ENCODE measurements at regions of chr6 and their contacts with region 1.

Region 1: DNA sequence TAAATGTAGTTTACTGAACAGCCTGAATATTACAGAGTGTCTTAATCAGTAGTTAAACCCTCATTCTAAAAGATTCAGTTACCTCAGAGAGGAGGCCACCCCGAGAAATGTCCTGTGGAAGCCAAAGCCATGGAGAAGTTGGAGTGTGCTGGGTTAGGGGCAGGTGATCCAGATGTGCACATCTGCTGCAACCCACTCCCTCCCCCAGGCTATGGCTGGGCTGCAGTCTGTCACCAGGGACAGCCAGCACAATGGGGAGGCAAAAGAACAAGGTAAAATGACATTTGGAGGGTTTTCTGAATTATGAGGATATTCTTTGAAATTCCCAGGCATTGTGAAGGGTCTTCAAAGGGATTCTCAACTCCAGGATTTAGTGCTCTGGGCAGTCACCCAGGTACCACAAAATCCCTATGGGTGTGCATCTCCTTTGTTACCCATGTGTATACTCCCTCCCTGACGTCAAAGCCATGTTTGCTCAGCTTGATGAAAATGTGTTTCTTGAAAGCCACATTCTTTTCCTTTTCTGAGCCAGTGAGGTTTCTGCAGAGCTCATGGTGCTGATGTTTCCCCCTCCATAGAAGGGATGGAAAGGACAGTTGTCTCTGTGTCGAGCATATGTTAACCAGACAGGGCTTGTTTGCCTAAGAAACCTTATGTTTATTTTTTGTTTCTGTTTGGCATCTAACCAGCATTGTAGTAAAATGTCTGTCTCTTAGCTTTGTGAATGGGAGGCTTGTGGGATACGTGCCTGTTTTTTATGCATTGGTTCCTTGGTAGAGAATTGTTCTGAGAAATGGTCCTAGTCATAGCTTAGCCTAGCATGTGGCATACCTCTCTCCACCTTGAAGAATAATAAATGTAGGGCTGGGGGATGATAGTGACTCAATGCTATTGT is 212.4 kb upstream of the TBX18 start:
- DNase-seq: peak; percentile 71
- H3K4me3 ChIP-seq: no peak overlapping the region
- H3K27ac ChIP-seq: no peak overlapping the region
- H3K4me1 ChIP-seq: peaks cover 32% of the 10 kb centered on the region
- H3K27me3 ChIP-seq: no peaks in the 10 kb centered on the region
- CTCF ChIP-seq: no peak
- POLR2A ChIP-seq: no peak

Region 2: DNA sequence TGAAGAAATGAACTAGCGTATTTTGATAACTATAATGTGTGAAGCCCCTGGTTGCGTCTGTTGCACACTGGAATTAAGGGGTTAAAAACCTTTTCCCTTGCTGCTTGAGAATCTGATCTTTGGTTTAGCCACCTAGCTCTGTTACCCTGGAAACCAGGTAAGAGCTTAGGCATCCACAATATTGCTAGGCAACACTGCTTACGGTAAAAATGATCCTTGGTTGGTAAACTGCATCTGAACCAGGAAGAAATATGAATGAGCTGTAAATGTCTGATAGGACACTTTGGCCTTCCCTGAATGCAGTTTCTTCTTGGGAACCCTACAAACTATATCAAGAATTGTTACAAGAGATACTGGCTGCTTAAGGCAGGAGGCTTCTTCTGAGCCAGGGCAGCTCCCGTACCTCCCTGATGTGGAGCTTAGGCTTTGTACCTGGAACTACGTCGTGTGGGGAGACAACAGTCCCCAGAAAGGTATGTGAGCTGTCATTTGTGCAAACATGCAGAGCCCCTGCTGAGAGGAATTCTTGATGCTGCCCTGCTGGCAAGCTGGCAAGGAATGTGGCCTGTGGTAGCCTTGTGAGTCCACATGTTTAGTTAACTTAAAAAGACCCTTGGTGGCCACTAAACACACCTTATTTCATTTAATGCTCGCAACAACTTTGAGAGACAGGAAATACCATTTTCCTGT is 1929.6 kb before region 1 on chr6:
- CTCF ChIA-PET with region 1: no interaction called
- POLR2A ChIA-PET with region 1: no interaction called
- dilution Hi-C with region 1: no loop called
- intact Hi-C with region 1: no loop called
- DNase-seq: no peak
- H3K4me3 ChIP-seq: no peak overlapping the region
- H3K27ac ChIP-seq: no peak overlapping the region
- H3K4me1 ChIP-seq: no peaks in the 10 kb centered on the region
- H3K27me3 ChIP-seq: no peaks in the 10 kb centered on the region
- CTCF ChIP-seq: no peak
- POLR2A ChIP-seq: no peak

Region 3: DNA sequence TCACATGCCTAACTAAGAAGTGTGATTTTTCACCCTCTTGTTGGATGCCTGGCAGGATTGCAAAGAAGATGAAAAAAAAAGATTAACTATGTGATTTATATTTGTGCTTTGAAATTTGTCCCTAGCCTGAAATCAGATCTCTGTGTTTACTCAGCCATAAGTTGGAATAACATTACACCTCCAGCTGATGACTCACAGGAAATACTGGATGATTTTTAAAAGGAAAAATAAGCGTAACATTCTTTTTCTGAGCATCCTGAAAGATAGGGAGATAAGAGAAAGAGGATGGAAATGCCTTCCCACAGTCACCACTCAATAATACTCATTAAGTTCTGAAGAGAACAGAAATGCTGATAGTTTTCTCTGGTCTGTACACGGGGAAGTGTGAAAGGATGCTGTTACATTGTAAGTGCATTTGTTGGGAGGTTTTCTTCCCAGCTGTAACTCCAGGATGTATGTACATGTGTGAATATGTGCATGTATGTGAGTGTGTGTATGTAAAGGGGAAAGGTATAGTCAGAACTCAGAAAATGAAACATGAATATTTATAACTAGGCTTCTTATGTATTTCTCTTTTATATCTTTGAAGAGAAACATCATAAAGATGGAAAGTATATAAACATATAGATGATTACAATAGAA is 1161.0 kb before region 1 on chr6:
- CTCF ChIA-PET with region 1: no interaction called
- POLR2A ChIA-PET with region 1: no interaction called
- dilution Hi-C with region 1: no loop called
- intact Hi-C with region 1: loop called (anchors 1 kb)
- DNase-seq: peak; percentile 97
- H3K4me3 ChIP-seq: no peak overlapping the region
- H3K27ac ChIP-seq: peak overlapping the region; percentile 57
- H3K4me1 ChIP-seq: peaks cover 28% of the 10 kb centered on the region
- H3K27me3 ChIP-seq: no peaks in the 10 kb centered on the region
- CTCF ChIP-seq: no peak
- POLR2A ChIP-seq: peak; percentile 78

Region 4: GRCh38 chr6:84618046-84618752 is 358.6 kb before region 1 on chr6:
- CTCF ChIA-PET with region 1: no interaction called
- POLR2A ChIA-PET with region 1: no interaction called
- dilution Hi-C with region 1: no loop called
- intact Hi-C with region 1: loop called (anchors 5 kb)
- DNase-seq: peak; percentile 96
- H3K4me3 ChIP-seq: no peak overlapping the region
- H3K27ac ChIP-seq: peak overlapping the region; percentile 100
- H3K4me1 ChIP-seq: peaks cover 28% of the 10 kb centered on the region
- H3K27me3 ChIP-seq: no peaks in the 10 kb centered on the region
- CTCF ChIP-seq: no peak
- POLR2A ChIP-seq: no peak

Region 5: GRCh38 chr6:84791233-84791632 is 185.5 kb before region 1 on chr6:
- CTCF ChIA-PET with region 1: interaction called, 3 read pairs
- POLR2A ChIA-PET with region 1: no interaction called
- dilution Hi-C with region 1: no loop called
- intact Hi-C with region 1: loop called (anchors 1 kb)
- DNase-seq: peak; percentile 91
- H3K4me3 ChIP-seq: peak overlapping the region in 1 of 3 experiments; percentile 27
- H3K27ac ChIP-seq: peak overlapping the region; percentile 70
- H3K4me1 ChIP-seq: peaks cover 21% of the 10 kb centered on the region
- H3K27me3 ChIP-seq: no peaks in the 10 kb centered on the region
- CTCF ChIP-seq: no peak
- POLR2A ChIP-seq: no peak

Region 6: GRCh38 chr6:84897988-84898594 is 78.7 kb before region 1 on chr6:
- CTCF ChIA-PET with region 1: interaction called, 3 read pairs
- POLR2A ChIA-PET with region 1: no interaction called
- dilution Hi-C with region 1: no loop called
- intact Hi-C with region 1: loop called (anchors 1 kb)
- DNase-seq: peak; percentile 87
- H3K4me3 ChIP-seq: no peak overlapping the region
- H3K27ac ChIP-seq: peak overlapping the region; percentile 71
- H3K4me1 ChIP-seq: peaks cover 21% of the 10 kb centered on the region
- H3K27me3 ChIP-seq: no peaks in the 10 kb centered on the region
- CTCF ChIP-seq: no peak
- POLR2A ChIP-seq: no peak

Region 7: DNA sequence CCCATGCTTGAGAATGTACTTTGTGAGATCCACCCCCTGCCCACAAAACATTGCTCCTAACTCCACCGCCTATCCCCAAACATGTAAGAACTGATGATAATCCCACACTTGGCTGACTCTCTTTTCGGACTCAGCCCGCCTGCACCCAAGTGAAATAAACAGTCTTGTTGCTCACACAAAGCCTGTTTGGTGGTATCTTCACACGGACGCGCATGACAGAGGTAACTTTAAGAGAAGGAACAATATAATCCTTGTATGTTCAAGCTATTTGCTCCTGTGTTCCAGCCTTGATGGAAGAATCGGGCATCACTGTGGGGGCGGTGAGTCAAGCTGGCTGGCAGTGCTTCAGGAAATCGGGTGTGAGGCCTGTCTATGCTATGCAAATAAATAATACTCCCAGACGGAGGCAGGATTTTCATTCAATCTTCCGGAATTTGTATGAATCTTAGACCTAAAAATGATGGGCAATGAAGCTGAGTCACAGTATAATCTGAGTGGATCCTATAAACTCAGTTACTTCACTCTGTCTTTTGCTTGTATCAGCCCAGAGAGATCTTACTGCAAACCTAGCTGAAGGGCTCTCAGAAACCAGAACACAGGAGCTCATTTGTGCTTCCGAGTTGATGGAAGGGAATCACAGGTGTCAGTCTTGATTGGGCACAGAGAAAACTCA is 427.9 kb after region 1 on chr6:
- CTCF ChIA-PET with region 1: no interaction called
- POLR2A ChIA-PET with region 1: no interaction called
- dilution Hi-C with region 1: no loop called
- intact Hi-C with region 1: loop called (anchors 1 kb)
- DNase-seq: peak; percentile 93
- H3K4me3 ChIP-seq: peak overlapping the region in 1 of 3 experiments; percentile 14
- H3K27ac ChIP-seq: peak overlapping the region; percentile 94
- H3K4me1 ChIP-seq: peaks cover 55% of the 10 kb centered on the region
- H3K27me3 ChIP-seq: no peaks in the 10 kb centered on the region
- CTCF ChIP-seq: no peak
- POLR2A ChIP-seq: peak; percentile 43

Region 8: DNA sequence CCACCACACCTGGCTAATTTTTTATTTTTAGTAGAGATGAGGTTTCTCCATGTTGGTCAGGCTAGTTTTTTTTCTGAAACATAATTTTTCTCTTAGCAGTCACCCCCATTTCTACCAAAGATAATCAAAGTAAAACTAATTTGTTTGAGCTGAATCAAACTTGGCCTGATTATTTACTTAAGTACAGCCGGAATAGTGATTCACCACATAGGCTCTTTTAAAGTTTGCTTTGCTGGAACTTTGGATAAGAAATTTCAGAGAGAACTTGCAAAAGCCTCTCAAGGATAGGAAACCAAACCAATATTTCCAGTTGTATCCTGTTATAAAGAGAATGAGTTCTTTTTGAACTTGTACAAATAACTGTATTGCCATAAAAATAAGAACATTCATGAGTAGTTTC is 770.9 kb after region 1 on chr6:
- CTCF ChIA-PET with region 1: no interaction called
- POLR2A ChIA-PET with region 1: no interaction called
- dilution Hi-C with region 1: no loop called
- intact Hi-C with region 1: no loop called
- DNase-seq: peak; percentile 15
- H3K4me3 ChIP-seq: no peak overlapping the region
- H3K27ac ChIP-seq: no peak overlapping the region
- H3K4me1 ChIP-seq: no peaks in the 10 kb centered on the region
- H3K27me3 ChIP-seq: no peaks in the 10 kb centered on the region
- CTCF ChIP-seq: no peak
- POLR2A ChIP-seq: no peak

Measured in endothelial cell of umbilical vein (primary cell).